Endothelial cell of umbilical vein (primary cell): ENCODE measurements at regions of chr14 and their contacts with region 1.

Region 1: DNA sequence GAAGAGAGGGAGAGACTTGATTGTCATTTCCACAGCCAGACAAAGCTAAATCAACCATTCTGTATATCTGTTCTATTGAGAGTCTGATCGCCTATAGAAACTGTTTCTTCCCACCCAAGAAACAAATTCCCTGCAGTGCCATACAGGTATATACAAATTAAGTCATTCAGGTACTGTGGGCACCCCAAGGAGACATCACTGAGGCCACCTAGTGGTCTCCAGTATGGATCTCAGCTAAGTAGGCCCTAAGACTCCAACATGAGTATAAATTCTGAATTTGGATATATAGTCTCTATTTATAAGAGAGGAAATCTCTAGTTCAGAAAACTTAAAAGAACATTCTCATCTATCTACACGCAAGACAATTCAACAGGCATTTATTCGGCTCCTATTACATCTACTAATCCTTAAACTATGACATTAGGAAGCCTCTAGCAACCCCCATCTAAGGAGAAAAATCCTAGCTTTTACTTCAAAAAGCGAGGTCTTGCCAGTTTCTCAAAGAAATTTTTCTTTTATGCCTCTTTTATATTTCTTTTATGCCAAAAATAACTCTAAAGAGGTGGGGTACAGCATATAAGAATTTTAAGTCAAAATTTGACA is 62.6 kb downstream of the DCAF5 start:
- DNase-seq: peak; percentile 59
- H3K4me3 ChIP-seq: no peak overlapping the region
- H3K27ac ChIP-seq: no peak overlapping the region
- H3K4me1 ChIP-seq: peaks cover 19% of the 10 kb centered on the region
- H3K27me3 ChIP-seq: no peaks in the 10 kb centered on the region
- CTCF ChIP-seq: peak; percentile 57 to 66
- POLR2A ChIP-seq: no peak

Region 2: DNA sequence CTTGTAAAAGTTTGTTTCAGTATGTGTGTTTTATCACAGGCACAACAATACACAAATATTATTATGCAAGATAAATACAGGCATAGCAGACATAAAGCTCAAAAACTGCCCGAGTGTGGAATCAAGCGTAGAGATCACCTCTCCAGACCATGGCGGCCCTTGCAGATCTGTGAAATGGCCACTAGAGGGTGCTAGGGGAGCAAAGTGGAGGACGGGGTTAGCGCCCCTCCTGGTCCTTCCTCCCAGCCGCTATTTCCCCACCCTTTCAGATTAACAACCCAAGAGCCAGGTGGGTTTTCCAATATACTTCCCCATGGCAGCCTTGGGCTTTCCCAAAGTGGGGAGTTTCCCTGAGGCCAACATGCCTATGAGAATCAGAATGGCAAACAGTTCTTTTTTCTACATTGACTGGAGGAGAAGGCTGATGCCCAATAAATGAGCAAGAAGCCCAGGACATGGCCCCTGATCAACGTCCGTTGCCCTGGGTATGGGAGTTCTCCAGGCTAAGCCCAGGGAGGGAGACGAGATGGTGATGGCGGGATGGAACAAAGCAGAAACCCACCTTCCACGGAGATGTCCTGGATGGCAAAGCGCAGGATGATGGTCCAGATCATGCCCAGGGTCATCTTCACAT is 178.6 kb before region 1 on chr14:
- CTCF ChIA-PET with region 1: interaction called, 13 read pairs
- POLR2A ChIA-PET with region 1: no interaction called
- dilution Hi-C with region 1: no loop called
- intact Hi-C with region 1: loop called (anchors 1 kb)
- DNase-seq: peak; percentile 76
- H3K4me3 ChIP-seq: no peak overlapping the region
- H3K27ac ChIP-seq: no peak overlapping the region
- H3K4me1 ChIP-seq: no peaks in the 10 kb centered on the region
- H3K27me3 ChIP-seq: no peaks in the 10 kb centered on the region
- CTCF ChIP-seq: peak; percentile 96 to 99
- POLR2A ChIP-seq: no peak

Region 3: DNA sequence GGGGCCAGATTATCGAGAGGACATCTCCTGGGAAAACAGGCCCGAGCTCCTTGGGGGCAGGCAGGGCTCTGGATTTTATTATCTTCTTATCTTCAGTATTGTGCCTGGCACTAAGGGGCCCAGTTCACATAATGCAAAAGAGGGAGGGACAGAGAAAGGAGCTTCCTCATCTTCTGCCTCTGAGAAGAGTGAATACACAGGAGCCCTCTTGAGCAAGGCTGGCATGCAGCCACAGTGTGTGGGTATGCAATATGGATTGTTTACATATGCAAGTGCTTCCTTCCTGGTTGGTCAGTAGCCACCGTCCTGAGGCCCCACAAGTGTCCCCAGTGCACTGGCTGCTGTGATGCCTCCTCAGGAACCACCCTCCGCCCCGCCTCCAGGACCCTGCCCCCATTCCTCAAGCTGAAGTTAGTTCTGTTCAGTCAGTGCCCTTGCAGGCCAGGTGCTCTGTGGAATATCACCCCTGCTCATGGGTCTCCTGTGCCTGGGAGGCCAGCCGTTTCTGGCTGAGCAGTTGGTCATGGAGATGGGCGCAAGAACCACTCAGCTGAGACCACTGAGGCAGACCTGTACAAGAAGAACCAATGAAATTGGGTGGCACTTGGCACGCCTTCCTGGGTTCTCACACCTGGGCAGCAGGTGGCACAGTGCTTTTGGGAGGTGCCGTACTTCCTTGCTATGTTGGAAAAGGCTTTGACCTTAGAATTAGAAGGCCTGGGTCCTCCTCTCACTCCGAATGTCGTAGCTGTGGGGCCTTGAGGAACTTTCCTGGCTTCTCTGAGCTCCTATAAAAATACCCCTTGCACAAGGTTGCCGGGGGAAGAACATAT is 76.1 kb before region 1 on chr14:
- CTCF ChIA-PET with region 1: interaction called, 10 read pairs
- POLR2A ChIA-PET with region 1: no interaction called
- dilution Hi-C with region 1: no loop called
- intact Hi-C with region 1: no loop called
- DNase-seq: peak; percentile 64
- H3K4me3 ChIP-seq: no peak overlapping the region
- H3K27ac ChIP-seq: no peak overlapping the region
- H3K4me1 ChIP-seq: peaks cover 15% of the 10 kb centered on the region
- H3K27me3 ChIP-seq: no peaks in the 10 kb centered on the region
- CTCF ChIP-seq: no peak
- POLR2A ChIP-seq: no peak

Region 4: DNA sequence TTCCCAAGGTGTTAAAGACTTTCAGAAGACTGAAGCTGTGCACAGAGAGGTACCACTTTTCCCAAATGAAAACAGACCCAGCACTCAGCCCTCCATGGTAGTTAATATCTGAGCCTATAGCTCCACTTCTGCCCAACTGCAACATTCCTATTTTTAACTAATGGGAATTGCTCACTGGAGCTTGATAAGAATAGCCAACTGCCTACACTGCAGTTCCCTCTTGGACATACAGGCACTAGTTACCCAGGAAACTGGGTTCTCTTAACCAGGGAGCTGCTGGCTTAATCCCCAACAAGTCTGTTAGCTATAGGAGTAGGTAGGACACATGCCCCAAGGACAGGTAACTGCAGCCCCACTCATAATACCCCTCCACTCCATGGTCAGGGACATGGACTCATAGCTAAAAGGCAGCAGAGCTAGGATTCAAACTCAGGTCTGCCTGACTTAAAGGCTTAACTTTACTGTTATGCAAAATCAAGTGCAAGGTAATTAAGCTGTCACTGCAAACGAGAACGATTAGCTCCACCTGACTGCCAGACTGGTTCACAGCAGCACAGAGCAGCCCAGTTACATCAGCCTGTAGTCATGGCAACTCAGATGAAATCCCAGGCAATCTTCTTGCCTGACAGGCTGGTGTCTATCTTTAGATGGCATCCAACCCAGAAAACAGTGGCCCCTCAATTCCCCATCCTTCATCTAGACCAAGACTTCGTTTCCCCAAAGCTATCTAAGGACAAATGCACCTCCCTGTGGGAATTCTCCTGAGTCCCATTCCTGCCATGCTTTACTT is 34.1 kb before region 1 on chr14:
- CTCF ChIA-PET with region 1: interaction called, 9 read pairs
- POLR2A ChIA-PET with region 1: no interaction called
- dilution Hi-C with region 1: no loop called
- intact Hi-C with region 1: loop called (anchors 5 kb)
- DNase-seq: peak; percentile 53
- H3K4me3 ChIP-seq: no peak overlapping the region
- H3K27ac ChIP-seq: peak overlapping the region; percentile 83
- H3K4me1 ChIP-seq: peaks cover 57% of the 10 kb centered on the region
- H3K27me3 ChIP-seq: no peaks in the 10 kb centered on the region
- CTCF ChIP-seq: peak in 1 of 2 donors; percentile 6
- POLR2A ChIP-seq: no peak

Region 5: GRCh38 chr14:69107407-69108003 is 17.2 kb after region 1 on chr14:
- CTCF ChIA-PET with region 1: interaction called, 10 read pairs
- POLR2A ChIA-PET with region 1: no interaction called
- dilution Hi-C with region 1: no loop called
- intact Hi-C with region 1: no loop called
- DNase-seq: peak; percentile 76
- H3K4me3 ChIP-seq: no peak overlapping the region
- H3K27ac ChIP-seq: no peak overlapping the region
- H3K4me1 ChIP-seq: peaks cover 2% of the 10 kb centered on the region
- H3K27me3 ChIP-seq: no peaks in the 10 kb centered on the region
- CTCF ChIP-seq: peak; percentile 58 to 73
- POLR2A ChIP-seq: no peak

Region 6: GRCh38 chr14:69945912-69946311 is 855.6 kb after region 1 on chr14:
- CTCF ChIA-PET with region 1: no interaction called
- POLR2A ChIA-PET with region 1: no interaction called
- dilution Hi-C with region 1: no loop called
- intact Hi-C with region 1: no loop called
- DNase-seq: peak; percentile 20
- H3K4me3 ChIP-seq: no peak overlapping the region
- H3K27ac ChIP-seq: no peak overlapping the region
- H3K4me1 ChIP-seq: no peaks in the 10 kb centered on the region
- H3K27me3 ChIP-seq: no peaks in the 10 kb centered on the region
- CTCF ChIP-seq: no peak
- POLR2A ChIP-seq: no peak